Activated CD8-positive, alpha-beta T cell treated with anti-CD3 and anti-CD28 coated beads for 36 hours (primary cell): ENCODE measurements at regions of chr15 and their contacts with region 1.

Region 1: DNA sequence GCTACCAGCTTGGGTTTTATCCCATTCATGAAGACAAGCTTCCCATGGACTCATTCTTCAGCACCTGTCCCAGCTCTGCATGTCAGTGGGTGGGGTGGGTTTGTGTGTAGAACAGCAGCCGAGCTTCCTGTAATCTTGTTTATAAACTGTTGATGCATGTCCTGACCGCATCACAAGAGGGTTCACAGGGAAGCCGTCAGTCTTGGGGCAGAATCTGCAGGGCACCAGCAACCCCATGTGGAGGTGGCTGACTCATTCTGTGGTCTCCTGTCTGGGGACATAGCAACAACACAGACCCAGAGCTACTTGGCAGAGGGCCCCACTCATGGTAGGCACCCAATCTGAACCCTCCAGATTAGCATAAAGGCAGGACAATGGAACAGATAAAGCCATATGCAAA is 35.6 kb downstream of the DAPK2 start:
- DNase-seq: peak; percentile 95
- ATAC-seq: peak; percentile 88
- H3K4me3 Mint-ChIP-seq: peak overlapping the region; percentile 22
- H3K27ac Mint-ChIP-seq: peak overlapping the region; percentile 88
- H3K4me1 Mint-ChIP-seq: peaks cover 37% of the 10 kb centered on the region
- H3K27me3 Mint-ChIP-seq: no peaks in the 10 kb centered on the region
- CTCF ChIP-seq: no peak

Region 2: DNA sequence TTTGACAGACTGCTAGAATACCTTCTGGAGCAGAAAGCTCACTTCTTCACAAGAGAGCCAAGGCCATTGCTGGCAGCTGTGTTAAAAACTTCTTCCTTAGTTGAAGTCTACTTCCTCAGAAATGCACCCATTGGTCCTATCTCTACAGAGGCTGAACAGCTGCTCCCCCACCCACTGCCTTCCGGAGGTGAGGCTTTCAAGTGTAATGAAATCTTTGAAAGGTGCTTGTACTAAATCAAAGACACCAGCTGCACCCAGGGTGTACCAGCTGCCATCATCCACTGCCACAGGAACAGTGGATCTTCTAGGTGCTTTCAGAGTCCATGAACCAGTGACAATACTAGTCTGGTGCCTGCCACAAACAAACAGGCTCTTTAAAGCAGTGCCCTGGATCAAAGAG is 150.6 kb before region 1 on chr15:
- CTCF ChIA-PET with region 1: no interaction called
- POLR2A ChIA-PET with region 1: no interaction called
- intact Hi-C with region 1: no loop called
- DNase-seq: peak; percentile 78
- ATAC-seq: peak; percentile 74
- H3K4me3 Mint-ChIP-seq: no peak overlapping the region
- H3K27ac Mint-ChIP-seq: peak overlapping the region; percentile 85
- H3K4me1 Mint-ChIP-seq: peaks cover 35% of the 10 kb centered on the region
- H3K27me3 Mint-ChIP-seq: no peaks in the 10 kb centered on the region
- CTCF ChIP-seq: no peak

Region 3: GRCh38 chr15:64023215-64023614 is 12.5 kb after region 1 on chr15:
- CTCF ChIA-PET with region 1: interaction called, 4 read pairs
- POLR2A ChIA-PET with region 1: interaction called, 10 read pairs
- intact Hi-C with region 1: no loop called
- DNase-seq: no peak
- ATAC-seq: no peak
- H3K4me3 Mint-ChIP-seq: no peak overlapping the region
- H3K27ac Mint-ChIP-seq: no peak overlapping the region
- H3K4me1 Mint-ChIP-seq: peaks cover 2% of the 10 kb centered on the region
- H3K27me3 Mint-ChIP-seq: no peaks in the 10 kb centered on the region
- CTCF ChIP-seq: no peak

Region 4: DNA sequence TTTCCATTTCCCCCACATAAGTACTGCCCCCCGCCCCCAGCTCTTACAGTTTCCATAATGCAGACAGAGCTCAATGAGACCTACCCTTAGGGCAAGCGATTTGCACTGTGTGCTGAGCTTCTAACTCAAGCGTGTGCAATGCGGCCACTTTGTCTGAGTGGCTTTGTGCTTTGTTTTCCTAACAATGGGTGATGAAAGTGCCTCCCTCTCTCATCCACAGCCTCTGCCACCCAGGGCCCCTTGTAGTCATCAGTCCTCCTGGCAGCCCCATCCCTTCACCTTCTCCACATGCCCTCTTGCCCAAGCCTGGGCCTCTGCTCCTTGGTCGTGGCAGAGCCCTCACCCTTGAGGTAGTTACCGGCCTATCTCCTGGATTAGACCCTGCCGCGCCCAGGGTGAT is 18.4 kb after region 1 on chr15:
- CTCF ChIA-PET with region 1: interaction called, 4 read pairs
- POLR2A ChIA-PET with region 1: interaction called, 10 read pairs
- intact Hi-C with region 1: no loop called
- DNase-seq: no peak
- ATAC-seq: peak; percentile 13
- H3K4me3 Mint-ChIP-seq: no peak overlapping the region
- H3K27ac Mint-ChIP-seq: peak overlapping the region; percentile 21
- H3K4me1 Mint-ChIP-seq: peaks cover 29% of the 10 kb centered on the region
- H3K27me3 Mint-ChIP-seq: no peaks in the 10 kb centered on the region
- CTCF ChIP-seq: no peak

Region 5: GRCh38 chr15:64112904-64113303 is 102.2 kb after region 1 on chr15:
- CTCF ChIA-PET with region 1: no interaction called
- POLR2A ChIA-PET with region 1: no interaction called
- intact Hi-C with region 1: no loop called
- DNase-seq: no peak
- ATAC-seq: no peak
- H3K4me3 Mint-ChIP-seq: no peak overlapping the region
- H3K27ac Mint-ChIP-seq: peak overlapping the region; percentile 14
- H3K4me1 Mint-ChIP-seq: peaks cover 22% of the 10 kb centered on the region
- H3K27me3 Mint-ChIP-seq: no peaks in the 10 kb centered on the region
- CTCF ChIP-seq: no peak